ENCODE measurements at regions of chr12 and their contacts with region 1.

Region 1: GRCh38 chr12:93502802-93503623 is 35.7 kb downstream of the MRPL42 start:
- DNase-seq: peak; percentile 77
- H3K4me3 Mint-ChIP-seq: no peak overlapping the region
- H3K27ac Mint-ChIP-seq: no peak overlapping the region
- H3K4me1 Mint-ChIP-seq: peaks cover 24% of the 10 kb centered on the region
- H3K27me3 Mint-ChIP-seq: no peaks in the 10 kb centered on the region

Region 2: GRCh38 chr12:93514853-93515252 is 11.8 kb after region 1 on chr12:
- CTCF ChIA-PET with region 1: interaction called, 10 read pairs
- POLR2A ChIA-PET with region 1: no interaction called
- DNase-seq: no peak
- H3K4me3 Mint-ChIP-seq: no peak overlapping the region
- H3K27ac Mint-ChIP-seq: no peak overlapping the region
- H3K4me1 Mint-ChIP-seq: no peaks in the 10 kb centered on the region
- H3K27me3 Mint-ChIP-seq: no peaks in the 10 kb centered on the region

Measured in activated CD4-positive, alpha-beta T cell treated with anti-CD3 and anti-CD28 coated beads, Interleukin-2, amount 10 ng/mL, durations not matched to agents 7 days and 5 days (primary cell).